Endothelial cell of umbilical vein (primary cell): ENCODE measurements at regions of chr1 and their contacts with region 1.

Region 1: GRCh38 chr1:111441573-111442192 is 7.4 kb downstream of the WDR77 start:
- DNase-seq: peak; percentile 29
- H3K4me3 ChIP-seq: no peak overlapping the region
- H3K27ac ChIP-seq: no peak overlapping the region
- H3K4me1 ChIP-seq: no peaks in the 10 kb centered on the region
- H3K27me3 ChIP-seq: no peaks in the 10 kb centered on the region
- CTCF ChIP-seq: peak; percentile 42 to 59
- POLR2A ChIP-seq: no peak

Region 2: DNA sequence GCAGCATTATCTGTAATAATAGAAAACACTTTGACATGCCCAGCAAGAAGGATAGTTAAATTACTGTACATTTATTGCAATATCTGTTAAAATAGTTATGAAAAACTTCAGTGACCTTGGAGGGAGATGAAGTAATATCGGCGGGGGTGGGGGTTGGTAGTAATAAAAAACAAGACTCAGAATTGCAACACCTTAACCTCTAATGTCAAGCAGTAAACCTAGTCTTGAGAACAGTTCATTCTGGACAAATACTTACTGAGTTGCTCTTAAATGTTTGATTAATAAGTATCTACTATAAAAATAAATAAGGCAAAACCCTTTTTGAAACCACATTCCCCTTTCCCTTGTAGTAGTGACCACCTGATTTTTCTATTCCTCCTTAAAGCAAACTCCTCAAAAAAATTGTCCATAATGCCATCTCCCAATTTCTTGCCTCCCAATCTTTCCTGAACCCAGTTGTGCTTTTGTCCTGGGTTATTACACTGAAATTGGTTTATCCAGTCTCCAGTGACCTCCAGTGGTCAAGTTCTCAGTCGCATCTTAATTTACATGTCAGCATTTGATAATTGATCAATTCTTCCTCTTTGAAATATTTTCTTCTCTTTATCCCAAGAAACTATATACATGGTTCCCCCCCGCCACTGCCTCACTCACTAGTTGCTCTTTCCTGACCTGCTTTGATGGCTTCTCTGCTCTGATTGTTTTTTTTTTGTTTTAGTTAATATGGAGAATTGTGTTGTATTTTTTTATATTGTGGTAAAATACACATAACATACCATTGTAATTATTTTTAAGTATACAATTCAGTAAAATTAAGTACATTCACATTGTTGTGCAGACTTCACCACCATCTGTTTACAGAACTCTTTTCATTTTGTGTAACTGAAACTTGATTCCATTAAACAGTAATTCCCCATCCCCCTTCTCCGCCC is 214.7 kb after region 1 on chr1:
- CTCF ChIA-PET with region 1: no interaction called
- POLR2A ChIA-PET with region 1: no interaction called
- dilution Hi-C with region 1: no loop called
- intact Hi-C with region 1: loop called (anchors 2 kb)
- DNase-seq: peak; percentile 67
- H3K4me3 ChIP-seq: no peak overlapping the region
- H3K27ac ChIP-seq: no peak overlapping the region
- H3K4me1 ChIP-seq: no peaks in the 10 kb centered on the region
- H3K27me3 ChIP-seq: no peaks in the 10 kb centered on the region
- CTCF ChIP-seq: peak; percentile 16 to 35
- POLR2A ChIP-seq: no peak